IMR-90 (cell line): ENCODE measurements at regions of chr3 and their contacts with region 1.

Region 1: GRCh38 chr3:66297900-66298299 is 77.1 kb downstream of the SLC25A26 start:
- DNase-seq: peak; percentile 75
- ATAC-seq: peak; percentile 67
- H3K4me3 ChIP-seq: no peak overlapping the region
- H3K27ac ChIP-seq: no peak overlapping the region
- H3K4me1 ChIP-seq: peaks cover 4% of the 10 kb centered on the region; the same call in 1 of the 2 replicates
- H3K27me3 ChIP-seq: no peaks in the 10 kb centered on the region
- CTCF ChIP-seq: no peak
- POLR2A ChIP-seq: no peak
- RAD21 ChIP-seq: no peak

Region 2: GRCh38 chr3:66336333-66336766 is 38.5 kb after region 1 on chr3:
- CTCF ChIA-PET with region 1: no interaction called
- POLR2A ChIA-PET with region 1: no interaction called
- dilution Hi-C with region 1: no loop called
- in situ Hi-C with region 1: no loop called
- intact Hi-C with region 1: loop called (anchors 5 kb)
- DNase-seq: peak; percentile 87
- ATAC-seq: peak; percentile 79
- H3K4me3 ChIP-seq: no peak overlapping the region
- H3K27ac ChIP-seq: no peak overlapping the region
- H3K4me1 ChIP-seq: peaks cover 2% of the 10 kb centered on the region; the same call in 1 of the 2 replicates
- H3K27me3 ChIP-seq: no peaks in the 10 kb centered on the region
- CTCF ChIP-seq: no peak
- POLR2A ChIP-seq: no peak
- RAD21 ChIP-seq: no peak

Region 3: GRCh38 chr3:66353530-66353929 is 55.6 kb after region 1 on chr3:
- CTCF ChIA-PET with region 1: no interaction called
- POLR2A ChIA-PET with region 1: no interaction called
- dilution Hi-C with region 1: no loop called
- in situ Hi-C with region 1: no loop called
- intact Hi-C with region 1: loop called (anchors 5 kb)
- DNase-seq: peak; percentile 89
- ATAC-seq: peak; percentile 89
- H3K4me3 ChIP-seq: no peak overlapping the region
- H3K27ac ChIP-seq: peak overlapping the region; percentile 42; the same call in 1 of the 2 replicates
- H3K4me1 ChIP-seq: peaks cover 5% of the 10 kb centered on the region
- H3K27me3 ChIP-seq: no peaks in the 10 kb centered on the region
- CTCF ChIP-seq: no peak
- POLR2A ChIP-seq: no peak
- RAD21 ChIP-seq: no peak

Region 4: DNA sequence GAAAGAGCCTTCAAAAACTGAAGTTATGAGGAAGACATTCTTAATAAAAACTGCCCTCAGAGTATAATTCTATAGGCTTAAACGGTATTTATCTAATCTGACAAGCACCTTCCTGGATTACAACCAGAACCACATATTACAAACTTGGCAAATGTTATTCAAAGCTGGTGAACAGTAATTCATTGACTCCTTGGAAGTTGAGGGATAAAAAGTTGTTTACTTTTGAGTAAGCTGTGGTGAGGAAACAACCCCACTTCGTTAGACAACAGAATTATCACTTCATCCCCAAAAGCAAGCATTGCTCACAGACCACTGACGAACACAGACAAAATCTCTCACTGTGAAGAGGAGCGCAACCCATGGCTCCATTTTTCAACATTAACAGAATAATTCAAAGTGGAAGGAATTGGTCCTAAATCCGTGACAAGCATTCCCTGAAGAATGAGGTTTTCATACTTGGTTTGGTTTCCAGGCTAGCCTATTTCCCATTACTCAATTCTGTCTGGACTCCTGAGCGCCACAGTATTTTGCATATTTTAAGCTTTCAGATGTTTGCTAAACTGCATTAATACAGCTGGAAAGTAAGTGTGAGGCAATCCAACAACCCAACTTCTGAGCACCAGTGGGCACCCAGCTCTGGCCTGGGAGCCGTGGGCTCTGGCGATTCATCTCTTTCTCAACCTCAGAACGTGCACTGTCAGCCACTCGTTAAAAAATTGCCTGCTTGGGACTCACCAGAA is 170.3 kb after region 1 on chr3:
- CTCF ChIA-PET with region 1: no interaction called
- POLR2A ChIA-PET with region 1: no interaction called
- dilution Hi-C with region 1: no loop called
- in situ Hi-C with region 1: no loop called
- intact Hi-C with region 1: no loop called
- DNase-seq: peak; percentile 41
- ATAC-seq: no peak
- H3K4me3 ChIP-seq: no peak overlapping the region
- H3K27ac ChIP-seq: no peak overlapping the region
- H3K4me1 ChIP-seq: peaks cover 20% of the 10 kb centered on the region
- H3K27me3 ChIP-seq: no peaks in the 10 kb centered on the region
- CTCF ChIP-seq: no peak
- POLR2A ChIP-seq: no peak
- RAD21 ChIP-seq: no peak

Region 5: GRCh38 chr3:66638717-66639116 is 340.8 kb after region 1 on chr3:
- CTCF ChIA-PET with region 1: no interaction called
- POLR2A ChIA-PET with region 1: no interaction called
- dilution Hi-C with region 1: no loop called
- in situ Hi-C with region 1: no loop called
- intact Hi-C with region 1: no loop called
- DNase-seq: no peak
- ATAC-seq: no peak
- H3K4me3 ChIP-seq: no peak overlapping the region
- H3K27ac ChIP-seq: no peak overlapping the region
- H3K4me1 ChIP-seq: no peaks in the 10 kb centered on the region
- H3K27me3 ChIP-seq: no peaks in the 10 kb centered on the region
- CTCF ChIP-seq: no peak
- POLR2A ChIP-seq: no peak
- RAD21 ChIP-seq: no peak